IMR-90 (cell line): ENCODE measurements at regions of chr7 and their contacts with region 1.

Region 1: GRCh38 chr7:133742709-133743538 is 384.2 kb upstream of the LRGUK start:
- DNase-seq: peak; percentile 36
- ATAC-seq: peak; percentile 32; the same call in 1 of the 2 replicates
- H3K4me3 ChIP-seq: no peak overlapping the region
- H3K27ac ChIP-seq: no peak overlapping the region
- H3K4me1 ChIP-seq: no peaks in the 10 kb centered on the region
- H3K27me3 ChIP-seq: no peaks in the 10 kb centered on the region
- CTCF ChIP-seq: peak; percentile 52
- POLR2A ChIP-seq: no peak
- RAD21 ChIP-seq: peak; percentile 62

Region 2: DNA sequence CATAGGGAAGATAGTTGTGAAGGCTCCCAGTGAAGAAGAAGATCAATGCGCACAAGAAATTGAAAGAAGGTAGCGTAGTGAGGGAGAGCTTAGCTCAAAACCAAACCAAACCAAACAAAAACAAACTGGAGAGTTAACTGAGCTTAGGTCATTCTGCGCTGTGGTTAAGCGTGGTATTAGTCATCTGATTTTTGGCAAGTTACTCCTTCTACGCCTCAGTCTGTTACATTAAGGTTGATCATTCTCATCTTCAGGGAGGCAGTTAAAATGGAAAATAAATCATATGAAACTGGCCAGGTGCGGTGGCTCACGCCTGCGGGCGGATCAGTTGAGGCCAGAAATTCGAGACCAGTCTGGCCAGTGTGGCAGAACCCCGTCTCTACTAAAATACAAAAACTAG is 230.4 kb before region 1 on chr7:
- CTCF ChIA-PET with region 1: no interaction called
- POLR2A ChIA-PET with region 1: no interaction called
- dilution Hi-C with region 1: no loop called
- in situ Hi-C with region 1: no loop called
- intact Hi-C with region 1: loop called (anchors 5 kb)
- DNase-seq: peak; percentile 94
- ATAC-seq: peak; percentile 74
- H3K4me3 ChIP-seq: no peak overlapping the region
- H3K27ac ChIP-seq: peak overlapping the region; percentile 41; the same call in 1 of the 2 replicates
- H3K4me1 ChIP-seq: no peaks in the 10 kb centered on the region; the same call in 1 of the 2 replicates
- H3K27me3 ChIP-seq: no peaks in the 10 kb centered on the region
- CTCF ChIP-seq: no peak
- POLR2A ChIP-seq: no peak
- RAD21 ChIP-seq: no peak

Region 3: GRCh38 chr7:133582766-133583523 is 160.0 kb before region 1 on chr7:
- CTCF ChIA-PET with region 1: no interaction called
- POLR2A ChIA-PET with region 1: no interaction called
- dilution Hi-C with region 1: no loop called
- in situ Hi-C with region 1: no loop called
- intact Hi-C with region 1: loop called (anchors 5 kb)
- DNase-seq: peak; percentile 91
- ATAC-seq: peak; percentile 93
- H3K4me3 ChIP-seq: no peak overlapping the region
- H3K27ac ChIP-seq: peak overlapping the region; percentile 100
- H3K4me1 ChIP-seq: peaks cover 13% of the 10 kb centered on the region
- H3K27me3 ChIP-seq: no peaks in the 10 kb centered on the region
- CTCF ChIP-seq: no peak
- POLR2A ChIP-seq: no peak
- RAD21 ChIP-seq: no peak

Region 4: GRCh38 chr7:133770863-133771492 is 28.1 kb after region 1 on chr7:
- CTCF ChIA-PET with region 1: interaction called, 5 read pairs
- POLR2A ChIA-PET with region 1: no interaction called
- dilution Hi-C with region 1: no loop called
- in situ Hi-C with region 1: no loop called
- intact Hi-C with region 1: loop called (anchors 2 kb)
- DNase-seq: peak; percentile 80
- ATAC-seq: peak; percentile 90
- H3K4me3 ChIP-seq: no peak overlapping the region
- H3K27ac ChIP-seq: no peak overlapping the region; the same call in 1 of the 2 replicates
- H3K4me1 ChIP-seq: no peaks in the 10 kb centered on the region
- H3K27me3 ChIP-seq: no peaks in the 10 kb centered on the region
- CTCF ChIP-seq: no peak
- POLR2A ChIP-seq: no peak
- RAD21 ChIP-seq: no peak

Region 5: GRCh38 chr7:133794479-133794878 is 51.6 kb after region 1 on chr7:
- CTCF ChIA-PET with region 1: no interaction called
- POLR2A ChIA-PET with region 1: no interaction called
- dilution Hi-C with region 1: no loop called
- in situ Hi-C with region 1: no loop called
- intact Hi-C with region 1: no loop called
- DNase-seq: peak; percentile 11
- ATAC-seq: no peak
- H3K4me3 ChIP-seq: no peak overlapping the region
- H3K27ac ChIP-seq: no peak overlapping the region
- H3K4me1 ChIP-seq: peaks cover 5% of the 10 kb centered on the region; the same call in 1 of the 2 replicates
- H3K27me3 ChIP-seq: no peaks in the 10 kb centered on the region
- CTCF ChIP-seq: no peak
- POLR2A ChIP-seq: no peak
- RAD21 ChIP-seq: no peak

Region 6: DNA sequence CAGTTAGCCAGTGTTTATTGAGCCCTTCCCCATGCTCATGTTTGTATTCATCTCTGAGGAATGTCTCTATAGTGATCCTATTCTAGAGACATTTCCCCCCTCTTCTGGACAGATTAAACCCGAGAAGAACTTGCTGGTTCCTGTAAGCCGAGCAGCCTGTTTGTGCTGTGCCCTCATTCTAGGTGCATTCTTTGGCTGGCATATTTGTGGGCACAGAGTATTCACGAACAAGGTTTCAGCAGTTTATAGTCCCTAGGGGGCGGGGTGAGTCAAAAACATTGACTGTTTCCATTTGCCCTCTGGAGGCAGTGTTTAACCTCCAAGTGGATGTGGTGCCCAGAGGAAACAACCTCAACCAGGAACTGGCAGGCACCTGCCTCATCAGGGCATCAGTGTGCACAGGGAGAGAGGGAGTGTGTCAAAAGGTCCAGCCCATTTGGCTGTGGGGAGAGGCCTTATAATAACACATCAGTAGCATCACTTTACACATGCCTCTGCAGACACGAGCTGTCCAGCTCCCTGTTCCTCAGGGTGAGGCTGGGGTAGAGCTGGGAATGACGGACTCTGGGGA is 110.9 kb after region 1 on chr7:
- CTCF ChIA-PET with region 1: interaction called, 3 read pairs
- POLR2A ChIA-PET with region 1: no interaction called
- dilution Hi-C with region 1: no loop called
- in situ Hi-C with region 1: no loop called
- intact Hi-C with region 1: loop called (anchors 5 kb)
- DNase-seq: peak; percentile 90
- ATAC-seq: peak; percentile 91
- H3K4me3 ChIP-seq: no peak overlapping the region
- H3K27ac ChIP-seq: peak overlapping the region; percentile 44
- H3K4me1 ChIP-seq: peaks cover 9% of the 10 kb centered on the region
- H3K27me3 ChIP-seq: no peaks in the 10 kb centered on the region
- CTCF ChIP-seq: peak; percentile 46
- POLR2A ChIP-seq: no peak
- RAD21 ChIP-seq: peak; percentile 49

Region 7: GRCh38 chr7:134016223-134016941 is 273.5 kb after region 1 on chr7:
- CTCF ChIA-PET with region 1: no interaction called
- POLR2A ChIA-PET with region 1: no interaction called
- dilution Hi-C with region 1: no loop called
- in situ Hi-C with region 1: no loop called
- intact Hi-C with region 1: loop called (anchors 10 kb)
- DNase-seq: peak; percentile 39
- ATAC-seq: peak; percentile 77
- H3K4me3 ChIP-seq: no peak overlapping the region
- H3K27ac ChIP-seq: no peak overlapping the region
- H3K4me1 ChIP-seq: no peaks in the 10 kb centered on the region
- H3K27me3 ChIP-seq: no peaks in the 10 kb centered on the region
- CTCF ChIP-seq: peak; percentile 67
- POLR2A ChIP-seq: no peak
- RAD21 ChIP-seq: peak; percentile 76

Region 8: DNA sequence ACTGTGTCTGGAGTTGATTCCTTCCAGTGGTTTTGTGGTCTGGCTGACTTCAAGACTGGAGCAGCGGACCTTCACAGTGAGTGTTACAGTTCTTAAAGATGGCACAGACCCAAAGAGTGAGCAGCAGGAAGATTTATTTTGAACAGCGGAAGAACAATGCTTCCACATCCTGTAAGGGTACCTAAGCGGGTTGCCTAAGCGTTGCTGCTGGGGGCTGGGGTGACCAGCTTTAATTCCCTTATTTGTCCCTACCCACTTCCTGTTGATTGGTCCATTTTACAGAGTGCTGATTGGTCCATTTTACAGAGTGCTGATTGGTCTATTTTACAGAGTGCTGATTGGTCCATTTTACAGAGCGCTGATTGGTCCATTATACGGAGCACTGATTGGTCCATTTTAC is 819.2 kb after region 1 on chr7:
- CTCF ChIA-PET with region 1: no interaction called
- POLR2A ChIA-PET with region 1: no interaction called
- dilution Hi-C with region 1: no loop called
- in situ Hi-C with region 1: no loop called
- intact Hi-C with region 1: no loop called
- DNase-seq: peak; percentile 47
- ATAC-seq: no peak
- H3K4me3 ChIP-seq: no peak overlapping the region
- H3K27ac ChIP-seq: no peak overlapping the region
- H3K4me1 ChIP-seq: peaks cover 5% of the 10 kb centered on the region
- H3K27me3 ChIP-seq: peaks cover 20% of the 10 kb centered on the region
- CTCF ChIP-seq: no peak
- POLR2A ChIP-seq: no peak
- RAD21 ChIP-seq: no peak